K562 (cell line): ENCODE measurements at regions of chr10 and their contacts with region 1.

Region 1: DNA sequence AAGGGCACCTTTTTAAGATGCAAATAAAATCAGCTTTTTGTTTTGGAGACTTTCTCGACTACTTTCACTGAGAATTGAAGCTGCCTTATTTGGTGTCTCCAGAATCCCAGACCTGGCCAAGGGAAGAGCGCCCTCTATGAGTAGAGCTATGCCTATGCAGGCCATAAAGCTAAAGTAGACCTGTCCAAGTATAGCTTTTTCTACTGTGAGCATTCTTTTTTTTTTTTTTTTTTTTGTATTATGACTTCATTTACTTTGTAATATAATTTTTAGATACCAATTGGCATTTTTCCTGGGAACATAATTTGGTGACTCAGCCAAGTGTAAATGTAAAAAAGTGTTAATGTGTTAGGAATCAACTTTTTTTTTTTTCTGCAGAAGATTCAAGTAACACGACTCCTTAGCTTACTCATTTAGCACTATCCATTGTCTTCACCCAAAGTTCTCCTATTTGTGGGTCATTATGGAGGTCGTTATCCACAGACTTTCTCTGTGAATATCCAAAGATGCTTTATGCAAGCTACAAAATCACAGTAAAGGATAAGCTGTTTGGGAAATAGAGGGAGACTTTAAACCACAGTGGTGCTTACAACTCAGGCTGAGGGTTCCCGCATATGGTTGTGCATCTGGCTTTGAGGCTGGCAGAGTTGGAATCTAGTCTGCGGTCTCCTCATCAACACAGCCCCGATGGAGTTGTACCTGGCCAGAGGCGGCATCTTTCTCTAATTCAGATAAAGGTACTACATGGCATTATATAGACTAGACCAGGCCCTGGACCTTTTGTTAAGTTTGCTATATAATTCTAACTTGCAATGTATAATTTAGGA is 1040.2 kb upstream of the SORCS1 start:
- DNase-seq: peak; percentile 3 to 20 (median 12)
- ATAC-seq: no peak
- H3K4me3 ChIP-seq: no peak overlapping the region
- H3K27ac ChIP-seq: no peak overlapping the region
- H3K4me1 ChIP-seq: no peaks in the 10 kb centered on the region
- H3K27me3 ChIP-seq: no peaks in the 10 kb centered on the region
- CTCF ChIP-seq: peak; percentile 25 to 33 (median 32); a peak in 2 of 6 replicates
- EP300 ChIP-seq: no peak
- POLR2A ChIP-seq: no peak
- RAD21 ChIP-seq: no peak; a peak in 1 of 4 replicates

Region 2: GRCh38 chr10:106625751-106626150 is 1578.9 kb before region 1 on chr10:
- CTCF ChIA-PET with region 1: no interaction called
- POLR2A ChIA-PET with region 1: no interaction called
- in situ Hi-C with region 1: no loop called
- intact Hi-C with region 1: loop called (anchors 10 kb)
- DNase-seq: no peak
- ATAC-seq: no peak
- H3K4me3 ChIP-seq: no peak overlapping the region
- H3K27ac ChIP-seq: no peak overlapping the region
- H3K4me1 ChIP-seq: no peaks in the 10 kb centered on the region
- H3K27me3 ChIP-seq: no peaks in the 10 kb centered on the region
- CTCF ChIP-seq: no peak
- EP300 ChIP-seq: no peak
- POLR2A ChIP-seq: no peak
- RAD21 ChIP-seq: no peak

Region 3: GRCh38 chr10:107671960-107672359 is 532.7 kb before region 1 on chr10:
- CTCF ChIA-PET with region 1: no interaction called
- POLR2A ChIA-PET with region 1: no interaction called
- in situ Hi-C with region 1: no loop called
- intact Hi-C with region 1: no loop called
- DNase-seq: no peak
- ATAC-seq: no peak
- H3K4me3 ChIP-seq: no peak overlapping the region
- H3K27ac ChIP-seq: no peak overlapping the region
- H3K4me1 ChIP-seq: no peaks in the 10 kb centered on the region
- H3K27me3 ChIP-seq: no peaks in the 10 kb centered on the region
- CTCF ChIP-seq: no peak
- EP300 ChIP-seq: no peak
- POLR2A ChIP-seq: no peak
- RAD21 ChIP-seq: no peak